PC-9 (cell line): ENCODE measurements at regions of chr2 and their contacts with region 1.

Region 1: GRCh38 chr2:150478200-150478974 is 9.1 kb downstream of the RND3 start:
- DNase-seq: peak; percentile 63 to 79
- H3K4me3 ChIP-seq: peak overlapping the region; percentile 34; the same call in 1 of the 2 replicates
- H3K27ac ChIP-seq: peak overlapping the region; percentile 93
- H3K4me1 ChIP-seq: peaks cover 100% of the 10 kb centered on the region
- H3K27me3 ChIP-seq: no peaks in the 10 kb centered on the region
- CTCF ChIP-seq: no peak

Region 2: GRCh38 chr2:149799013-149799705 is 679.2 kb before region 1 on chr2:
- CTCF ChIA-PET with region 1: no interaction called
- POLR2A ChIA-PET with region 1: no interaction called
- intact Hi-C with region 1: loop called (anchors 2 kb)
- DNase-seq: peak in 1 of 2 experiments; percentile 4
- H3K4me3 ChIP-seq: no peak overlapping the region
- H3K27ac ChIP-seq: no peak overlapping the region
- H3K4me1 ChIP-seq: no peaks in the 10 kb centered on the region
- H3K27me3 ChIP-seq: no peaks in the 10 kb centered on the region
- CTCF ChIP-seq: peak; percentile 37; the same call in 1 of the 2 replicates

Region 3: DNA sequence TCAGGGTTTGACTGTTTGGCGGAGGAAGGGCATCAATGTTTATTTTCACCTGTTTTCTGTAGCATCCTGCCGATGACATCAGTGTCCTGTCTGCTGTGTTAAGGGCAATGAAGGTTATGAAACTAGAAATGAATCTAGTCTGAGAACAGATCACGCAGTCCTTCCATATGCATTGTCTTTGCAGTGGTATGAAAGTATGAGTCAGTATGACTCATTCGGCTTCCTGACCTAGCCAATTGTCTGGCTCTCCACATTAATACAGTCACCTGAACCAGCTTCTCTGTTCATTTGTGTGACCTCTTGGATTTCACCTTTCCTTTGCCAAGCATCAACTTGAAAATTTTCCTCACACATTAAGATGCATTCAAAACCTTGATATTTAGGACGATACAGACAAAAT is 344.8 kb before region 1 on chr2:
- CTCF ChIA-PET with region 1: no interaction called
- POLR2A ChIA-PET with region 1: no interaction called
- intact Hi-C with region 1: loop called (anchors 2 kb)
- DNase-seq: peak; percentile 49 to 81
- H3K4me3 ChIP-seq: no peak overlapping the region
- H3K27ac ChIP-seq: peak overlapping the region; percentile 74
- H3K4me1 ChIP-seq: peaks cover 5% of the 10 kb centered on the region; the same call in 1 of the 2 replicates
- H3K27me3 ChIP-seq: no peaks in the 10 kb centered on the region
- CTCF ChIP-seq: no peak

Region 4: GRCh38 chr2:150212722-150213171 is 265.6 kb before region 1 on chr2:
- CTCF ChIA-PET with region 1: no interaction called
- POLR2A ChIA-PET with region 1: interaction called, 28 read pairs
- intact Hi-C with region 1: no loop called
- DNase-seq: no peak
- H3K4me3 ChIP-seq: no peak overlapping the region
- H3K27ac ChIP-seq: no peak overlapping the region
- H3K4me1 ChIP-seq: peaks cover 15% of the 10 kb centered on the region
- H3K27me3 ChIP-seq: no peaks in the 10 kb centered on the region
- CTCF ChIP-seq: no peak

Region 5: GRCh38 chr2:150528861-150529801 is 50.7 kb after region 1 on chr2:
- CTCF ChIA-PET with region 1: no interaction called
- POLR2A ChIA-PET with region 1: interaction called, 13 read pairs
- intact Hi-C with region 1: no loop called
- DNase-seq: peak in 1 of 2 experiments; percentile 91
- H3K4me3 ChIP-seq: peak overlapping the region; percentile 33; the same call in 1 of the 2 replicates
- H3K27ac ChIP-seq: peak overlapping the region; percentile 95
- H3K4me1 ChIP-seq: peaks cover 51% of the 10 kb centered on the region
- H3K27me3 ChIP-seq: no peaks in the 10 kb centered on the region
- CTCF ChIP-seq: no peak